OCI-LY7 (cell line): ENCODE measurements at regions of chr9 and their contacts with region 1.

Region 1: DNA sequence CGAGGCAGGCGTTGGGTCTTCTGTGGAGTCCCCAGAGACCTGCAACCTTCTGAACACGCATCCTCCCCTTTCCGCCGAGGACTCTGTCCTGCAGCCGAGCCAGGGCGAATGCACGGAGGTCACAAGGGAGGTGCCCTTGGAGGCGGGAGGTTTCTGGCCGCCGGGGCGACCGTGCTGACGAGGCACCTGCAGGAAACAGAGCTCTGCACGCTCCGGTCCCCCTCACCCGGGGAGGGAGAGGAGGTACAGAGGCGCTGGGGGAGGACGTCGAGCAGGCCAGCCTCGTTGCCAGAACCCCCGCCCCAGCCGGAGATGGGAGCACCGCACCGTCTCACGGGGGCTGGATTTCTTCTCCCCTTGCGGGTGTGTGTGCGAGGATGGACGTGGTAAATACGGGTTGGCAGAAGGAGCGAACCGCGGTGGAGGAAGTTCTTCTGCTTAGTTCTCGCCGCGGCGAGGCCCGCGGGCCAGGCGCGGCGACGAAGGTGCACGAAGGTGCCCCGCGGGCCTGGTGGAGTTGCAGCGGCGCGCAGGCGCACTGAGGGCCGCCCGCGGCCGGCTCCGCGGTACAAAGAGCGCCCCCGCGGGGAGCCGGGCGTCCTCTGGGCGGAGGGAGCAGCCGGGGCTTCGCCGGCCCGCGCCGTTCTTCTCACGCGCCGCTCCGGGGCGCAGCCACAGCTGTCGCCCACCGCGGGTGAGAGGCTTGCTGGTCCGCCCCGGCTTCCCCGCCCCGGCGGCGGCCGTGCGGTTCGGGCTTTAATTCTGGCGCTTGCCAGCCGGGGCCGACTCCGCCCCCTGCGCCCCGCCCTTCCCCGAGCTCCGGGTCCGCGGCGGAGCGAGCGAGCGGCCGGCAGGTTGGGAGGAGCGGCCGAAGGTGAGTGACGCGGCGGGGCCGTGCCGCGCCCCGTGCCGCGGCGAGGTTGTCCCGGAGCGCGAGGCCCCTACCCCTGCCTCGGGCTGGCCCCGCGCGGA is 289.5 kb downstream of the DOCK8 start:
- DNase-seq: peak; percentile 91
- H3K4me3 ChIP-seq: peak within 1 kb of the TSS; percentile 88
- H3K27ac ChIP-seq: peak within 1 kb of the TSS; percentile 63
- H3K4me1 ChIP-seq: peaks cover 29% of the 10 kb centered on the region
- CTCF ChIP-seq: peak; percentile 71

Region 2: DNA sequence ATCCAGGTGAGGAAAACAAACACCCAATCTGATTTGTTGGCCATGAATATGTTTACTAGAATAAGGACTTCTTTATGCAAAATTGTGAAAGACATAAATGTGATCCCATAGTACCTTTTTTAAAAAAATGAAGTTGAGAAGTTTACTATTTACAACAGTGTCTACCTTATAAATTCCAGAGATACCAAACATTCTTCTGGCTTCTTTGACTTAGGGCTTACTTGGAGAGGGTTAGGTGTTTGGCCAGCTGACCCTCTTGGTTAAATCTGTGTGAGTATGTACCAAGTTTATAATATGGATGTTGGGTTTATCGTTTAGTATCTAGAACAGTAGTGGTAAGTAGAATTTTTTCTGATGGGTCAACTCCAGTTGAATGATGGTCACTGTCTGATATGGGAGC is 77.2 kb before region 1 on chr9:
- CTCF ChIA-PET with region 1: no interaction called
- POLR2A ChIA-PET with region 1: no interaction called
- intact Hi-C with region 1: no loop called
- DNase-seq: no peak
- H3K4me3 ChIP-seq: no peak overlapping the region
- H3K27ac ChIP-seq: no peak overlapping the region
- H3K4me1 ChIP-seq: no peaks in the 10 kb centered on the region
- CTCF ChIP-seq: no peak

Region 3: GRCh38 chr9:469672-470551 is 34.3 kb before region 1 on chr9:
- CTCF ChIA-PET with region 1: no interaction called
- POLR2A ChIA-PET with region 1: interaction called, 9 read pairs
- intact Hi-C with region 1: loop called (anchors 1 kb)
- DNase-seq: peak; percentile 91
- H3K4me3 ChIP-seq: peak overlapping the region; percentile 71
- H3K27ac ChIP-seq: peak overlapping the region; percentile 91
- H3K4me1 ChIP-seq: peaks cover 28% of the 10 kb centered on the region
- CTCF ChIP-seq: no peak

Region 4: DNA sequence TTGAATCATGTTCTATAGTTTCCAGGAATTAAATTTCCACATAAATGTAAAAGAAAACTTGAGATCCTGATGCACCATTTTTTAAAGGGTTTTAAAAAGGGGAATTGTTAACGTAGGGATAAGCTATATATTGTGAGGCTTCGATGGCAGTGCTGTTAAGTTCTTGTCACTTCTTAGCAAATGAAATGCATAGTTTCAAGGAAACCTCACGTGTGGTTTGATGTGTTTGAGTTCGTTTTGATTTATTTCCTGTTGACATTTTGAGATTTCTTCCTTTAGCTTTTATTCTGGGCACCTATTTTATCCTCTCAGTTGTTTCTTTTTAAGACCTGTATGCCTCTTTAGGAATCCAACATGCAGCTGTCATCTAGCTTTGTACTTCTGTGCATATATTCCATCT is 11.5 kb after region 1 on chr9:
- CTCF ChIA-PET with region 1: no interaction called
- POLR2A ChIA-PET with region 1: interaction called, 17 read pairs
- intact Hi-C with region 1: no loop called
- DNase-seq: no peak
- H3K4me3 ChIP-seq: no peak overlapping the region
- H3K27ac ChIP-seq: no peak overlapping the region
- H3K4me1 ChIP-seq: peaks cover 9% of the 10 kb centered on the region
- CTCF ChIP-seq: no peak

Region 5: GRCh38 chr9:536597-537511 is 32.7 kb after region 1 on chr9:
- CTCF ChIA-PET with region 1: no interaction called
- POLR2A ChIA-PET with region 1: interaction called, 5 read pairs
- intact Hi-C with region 1: loop called (anchors 2 kb)
- DNase-seq: peak; percentile 39
- H3K4me3 ChIP-seq: peak overlapping the region; percentile 49
- H3K27ac ChIP-seq: peak overlapping the region; percentile 55
- H3K4me1 ChIP-seq: peaks cover 52% of the 10 kb centered on the region
- CTCF ChIP-seq: peak; percentile 66

Region 6: DNA sequence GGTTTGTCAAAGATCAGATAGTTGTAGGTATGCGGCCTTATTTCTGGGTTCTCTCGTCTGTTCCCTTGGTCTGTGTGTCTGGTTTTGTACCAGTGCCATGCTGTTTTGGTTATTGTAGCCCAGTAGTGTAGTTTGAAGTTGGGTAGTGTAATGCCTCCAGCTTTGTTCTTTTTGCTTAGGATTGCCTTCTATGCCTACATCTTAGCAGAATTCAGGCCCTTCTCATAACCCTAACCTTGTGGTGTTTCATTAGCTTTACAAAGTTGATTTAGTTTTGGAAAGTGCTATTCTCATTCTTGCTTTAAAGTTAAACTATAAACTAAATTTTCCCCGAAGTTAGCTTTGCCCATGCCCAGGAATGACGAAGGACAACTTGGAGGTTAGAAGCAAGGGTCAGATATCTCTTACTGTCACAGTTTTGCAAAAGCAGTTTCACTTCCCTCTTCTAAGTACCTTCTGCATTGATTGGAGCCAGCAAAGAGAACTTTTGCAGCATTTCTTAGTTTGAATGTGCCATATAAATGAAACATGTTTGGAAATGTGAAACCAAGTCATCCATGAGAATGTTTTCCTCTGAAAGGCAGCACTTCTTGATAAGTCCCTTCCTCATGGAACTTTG is 63.1 kb after region 1 on chr9:
- CTCF ChIA-PET with region 1: interaction called, 3 read pairs
- POLR2A ChIA-PET with region 1: interaction called, 12 read pairs
- intact Hi-C with region 1: loop called (anchors 1 kb)
- DNase-seq: peak; percentile 86
- H3K4me3 ChIP-seq: peak overlapping the region; percentile 70
- H3K27ac ChIP-seq: peak overlapping the region; percentile 96
- H3K4me1 ChIP-seq: peaks cover 99% of the 10 kb centered on the region
- CTCF ChIP-seq: no peak

Region 7: GRCh38 chr9:706606-707459 is 202.7 kb after region 1 on chr9:
- CTCF ChIA-PET with region 1: no interaction called
- POLR2A ChIA-PET with region 1: no interaction called
- intact Hi-C with region 1: no loop called
- DNase-seq: no peak
- H3K4me3 ChIP-seq: no peak overlapping the region
- H3K27ac ChIP-seq: no peak overlapping the region
- H3K4me1 ChIP-seq: peaks cover 12% of the 10 kb centered on the region
- CTCF ChIP-seq: no peak

Region 8: GRCh38 chr9:763692-764524 is 259.7 kb after region 1 on chr9:
- CTCF ChIA-PET with region 1: no interaction called
- POLR2A ChIA-PET with region 1: no interaction called
- intact Hi-C with region 1: loop called (anchors 2 kb)
- DNase-seq: peak; percentile 93
- H3K4me3 ChIP-seq: no peak overlapping the region
- H3K27ac ChIP-seq: no peak overlapping the region
- H3K4me1 ChIP-seq: peaks cover 8% of the 10 kb centered on the region
- CTCF ChIP-seq: peak; percentile 99